ENCODE measurements at regions of chr9 and their contacts with region 1.

Region 1: DNA sequence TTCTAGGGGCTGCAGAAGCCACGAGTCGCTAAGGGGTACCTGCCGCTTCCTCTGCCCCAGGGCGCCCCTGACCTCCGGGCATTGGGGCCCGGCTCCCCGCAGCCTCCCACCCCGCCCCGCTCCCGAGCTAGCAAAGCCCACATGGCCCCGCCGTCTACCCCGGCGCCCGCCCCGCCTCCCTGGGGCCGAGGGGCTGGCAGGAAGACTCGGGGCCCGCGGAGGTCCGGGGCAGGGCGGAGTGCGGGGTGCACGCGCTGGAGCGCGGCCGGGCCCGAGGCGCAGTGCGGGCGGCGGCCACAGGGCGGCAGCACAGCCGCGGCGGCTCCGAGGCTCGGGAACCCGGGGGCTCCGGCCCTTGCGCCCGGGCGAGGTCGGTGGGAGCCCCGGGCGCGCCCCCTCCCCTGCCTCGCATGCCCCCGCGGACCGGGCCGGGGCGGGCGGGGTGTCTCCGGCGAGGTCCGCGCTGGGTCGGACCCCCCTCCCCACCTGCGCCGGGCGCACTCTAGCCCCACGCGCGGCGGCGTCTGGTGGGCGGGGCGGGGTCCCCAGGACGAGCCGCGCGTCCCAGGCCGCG is 6.7 kb downstream of the NRARP start:
- DNase-seq: peak in 4 of 5 donors; percentile 54 to 81 (median 70)
- H3K4me3 ChIP-seq: no peak overlapping the region
- H3K27ac ChIP-seq: peak overlapping the region in 1 of 2 donors; percentile 27
- H3K4me1 ChIP-seq: peaks cover 0 to 8% (median 0%) of the 10 kb centered on the region in 3 donors
- H3K27me3 ChIP-seq: no peaks in the 10 kb centered on the region
- CTCF ChIP-seq: peak; percentile 84

Region 2: DNA sequence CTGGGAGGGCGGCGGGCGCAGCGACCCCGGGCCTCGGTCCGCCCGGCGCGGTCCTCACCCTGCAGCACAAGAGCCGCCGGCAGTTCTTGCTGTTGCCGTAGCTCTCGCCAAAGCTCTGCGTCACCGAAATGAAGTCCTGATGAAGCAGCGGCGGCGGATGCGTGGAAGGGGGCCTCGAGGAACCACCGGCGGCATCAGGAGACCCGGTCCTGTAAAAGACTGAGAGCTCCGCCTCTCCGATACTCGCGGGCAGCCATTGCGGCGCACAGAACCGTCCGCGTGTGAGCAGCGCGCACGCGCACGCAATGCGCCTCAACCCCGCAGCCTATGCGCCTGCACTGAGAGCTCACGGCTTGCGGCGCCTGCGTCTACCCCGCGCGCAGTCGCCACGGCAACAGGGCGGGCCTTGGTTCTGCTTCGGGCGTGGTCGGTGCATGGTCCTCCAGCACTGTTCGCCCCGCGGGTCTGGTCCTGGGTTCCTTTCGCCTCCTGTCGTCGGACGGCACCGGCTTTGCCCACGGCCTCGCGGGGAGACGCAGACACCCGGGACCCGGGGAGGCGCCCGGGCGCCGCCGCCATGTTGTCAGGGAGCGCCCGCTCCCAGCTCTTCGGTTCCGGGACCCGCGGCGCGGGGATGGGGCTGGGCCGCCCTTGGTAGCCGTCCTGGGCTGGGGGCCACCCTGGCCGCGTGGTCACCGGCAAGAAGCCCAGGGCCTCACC is 165.7 kb before region 1 on chr9:
- intact Hi-C with region 1: no loop called
- DNase-seq: peak; percentile 89 to 96 (median 93)
- H3K4me3 ChIP-seq: peak overlapping the region; percentile 66 to 77 (median 72)
- H3K27ac ChIP-seq: peak overlapping the region in 1 of 2 donors; percentile 51
- H3K4me1 ChIP-seq: peaks cover 0 to 16% (median 0%) of the 10 kb centered on the region in 3 donors
- H3K27me3 ChIP-seq: no peaks in the 10 kb centered on the region
- CTCF ChIP-seq: no peak

Region 3: DNA sequence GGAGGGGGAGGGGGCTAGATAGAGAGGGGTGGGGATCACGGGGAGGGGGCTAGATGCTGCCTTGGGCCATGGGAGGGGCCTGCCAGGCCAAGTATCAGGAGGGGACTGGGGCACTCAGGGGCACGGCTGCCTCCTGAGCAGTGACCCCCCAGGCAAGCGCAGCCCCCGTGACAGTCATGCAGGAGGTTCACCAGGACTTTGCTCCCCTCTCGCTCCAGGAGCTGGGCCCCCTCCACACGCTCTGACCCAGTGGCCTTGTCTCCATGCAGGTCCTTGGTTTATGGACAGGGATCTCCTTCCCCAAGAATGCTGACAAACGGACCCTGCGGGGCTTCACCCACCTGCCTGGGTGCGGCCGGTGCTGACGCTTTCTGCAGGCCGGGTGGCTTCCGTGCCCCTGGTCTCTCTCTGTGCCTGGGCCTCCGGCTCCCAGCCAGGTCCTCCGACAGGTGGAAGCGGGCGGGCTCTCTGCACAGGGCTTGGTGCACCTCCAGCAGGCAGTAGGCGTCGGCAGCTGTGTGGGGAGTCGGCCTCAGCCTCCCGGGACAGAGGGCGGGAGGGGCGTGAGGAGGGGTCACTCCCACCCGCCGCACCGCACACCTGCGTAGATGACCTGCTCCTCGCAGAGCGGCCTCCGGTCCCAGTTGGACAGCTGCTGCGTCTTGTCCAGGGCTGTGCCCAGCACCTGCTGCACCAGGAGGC is 53.6 kb after region 1 on chr9:
- intact Hi-C with region 1: no loop called
- DNase-seq: peak in 1 of 5 donors; percentile 71
- H3K4me3 ChIP-seq: no peak overlapping the region
- H3K27ac ChIP-seq: no peak overlapping the region
- H3K4me1 ChIP-seq: no peaks in the 10 kb centered on the region
- H3K27me3 ChIP-seq: no peaks in the 10 kb centered on the region
- CTCF ChIP-seq: no peak

Region 4: GRCh38 chr9:137406876-137407589 is 111.7 kb after region 1 on chr9:
- intact Hi-C with region 1: loop called (anchors 5 kb)
- DNase-seq: peak; percentile 84 to 90 (median 88)
- H3K4me3 ChIP-seq: no peak overlapping the region
- H3K27ac ChIP-seq: no peak overlapping the region
- H3K4me1 ChIP-seq: peaks cover 0 to 11% (median 0%) of the 10 kb centered on the region in 3 donors
- H3K27me3 ChIP-seq: no peaks in the 10 kb centered on the region
- CTCF ChIP-seq: peak; percentile 75

Region 5: DNA sequence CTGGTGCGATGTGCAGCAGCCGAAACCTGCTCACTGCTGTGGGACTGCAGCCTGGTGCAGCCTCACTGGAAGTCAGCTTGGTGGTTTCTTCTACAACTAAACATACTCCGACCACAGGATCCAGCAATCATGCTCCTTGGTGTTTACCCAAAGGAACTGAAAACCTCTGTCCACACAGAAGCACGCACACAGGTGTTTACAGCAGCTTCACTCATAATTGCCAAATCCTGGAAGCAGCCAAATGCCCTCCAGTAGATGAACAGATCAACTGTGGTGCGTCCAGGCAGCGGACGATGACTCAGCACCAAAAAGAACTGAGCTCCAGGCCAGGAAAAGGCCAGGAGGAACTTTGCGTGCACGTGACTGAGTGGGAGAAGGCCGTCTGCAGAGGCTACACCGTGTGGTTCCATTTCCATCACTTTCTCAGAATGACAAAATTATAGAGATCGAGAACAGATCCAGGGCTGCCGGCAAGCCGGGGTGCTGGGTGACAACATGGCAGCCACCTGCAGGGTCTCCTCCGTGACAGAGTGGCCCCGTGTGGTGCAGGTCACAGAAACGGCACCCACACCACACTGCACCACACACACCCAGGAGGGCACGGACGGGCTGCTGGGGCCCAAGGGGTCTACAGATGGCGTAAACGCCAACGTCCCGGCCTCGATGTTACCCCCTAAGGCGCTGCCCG is 186.9 kb after region 1 on chr9:
- intact Hi-C with region 1: no loop called
- DNase-seq: peak in 1 of 5 donors; percentile 54
- H3K4me3 ChIP-seq: no peak overlapping the region
- H3K27ac ChIP-seq: no peak overlapping the region
- H3K4me1 ChIP-seq: no peaks in the 10 kb centered on the region
- H3K27me3 ChIP-seq: no peaks in the 10 kb centered on the region
- CTCF ChIP-seq: no peak

Region 6: GRCh38 chr9:137521405-137521985 is 226.2 kb after region 1 on chr9:
- intact Hi-C with region 1: loop called (anchors 10 kb)
- DNase-seq: no peak
- H3K4me3 ChIP-seq: no peak overlapping the region
- H3K27ac ChIP-seq: no peak overlapping the region
- H3K4me1 ChIP-seq: peaks cover 0 to 4% (median 0%) of the 10 kb centered on the region in 3 donors
- H3K27me3 ChIP-seq: no peaks in the 10 kb centered on the region
- CTCF ChIP-seq: no peak